ENCODE measurements at regions of chr1 and their contacts with region 1.

Region 1: DNA sequence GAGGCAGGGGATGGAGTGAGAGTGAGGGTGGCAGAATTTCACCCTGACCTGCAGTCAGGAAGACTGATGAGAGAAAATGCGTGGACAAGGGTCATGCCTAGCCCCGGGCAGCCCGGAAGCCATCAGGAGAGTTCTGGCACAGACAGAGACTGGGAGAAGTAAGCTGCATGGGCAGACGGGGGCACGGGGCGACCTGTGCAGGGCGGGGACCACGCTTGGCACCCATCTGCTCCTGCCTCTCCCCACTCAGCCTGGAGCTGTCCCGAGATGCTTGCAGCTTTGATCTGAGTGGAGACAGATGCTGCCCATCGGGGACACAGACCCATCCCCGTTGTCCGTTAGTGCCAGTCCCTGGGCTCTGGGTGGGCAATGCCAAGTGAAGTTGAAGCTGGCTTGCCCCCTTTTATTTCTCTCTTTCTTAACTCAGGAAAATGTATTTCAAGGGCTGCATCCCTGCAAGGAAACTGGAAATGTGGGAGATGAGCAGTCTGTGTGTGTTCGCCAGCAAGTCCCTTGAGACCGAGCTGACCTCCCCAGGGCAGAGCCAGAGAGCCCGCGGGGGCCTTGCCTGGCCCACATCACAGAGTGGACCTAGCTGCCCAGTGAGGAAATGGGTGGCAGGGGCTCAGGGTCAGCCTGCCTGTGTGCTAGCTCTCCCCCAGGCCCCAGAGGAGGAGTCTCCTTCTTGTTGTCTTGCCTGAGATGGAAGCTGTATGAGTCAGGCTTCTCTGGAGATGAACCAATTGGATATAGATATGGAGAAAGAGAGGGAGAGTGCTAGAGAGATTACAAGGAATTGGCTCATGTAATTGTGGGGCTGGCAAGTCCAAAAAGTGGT is 121.3 kb upstream of the C1orf174 start:
- DNase-seq: no peak
- H3K4me3 Mint-ChIP-seq: no peak overlapping the region
- H3K27ac Mint-ChIP-seq: no peak overlapping the region
- H3K4me1 Mint-ChIP-seq: no peaks in the 10 kb centered on the region
- H3K27me3 Mint-ChIP-seq: no peaks in the 10 kb centered on the region

Region 2: GRCh38 chr1:3586932-3587678 is 434.2 kb before region 1 on chr1:
- CTCF ChIA-PET with region 1: no interaction called
- intact Hi-C with region 1: loop called (anchors 5 kb)
- DNase-seq: no peak
- H3K4me3 Mint-ChIP-seq: no peak overlapping the region
- H3K27ac Mint-ChIP-seq: no peak overlapping the region
- H3K4me1 Mint-ChIP-seq: no peaks in the 10 kb centered on the region
- H3K27me3 Mint-ChIP-seq: no peaks in the 10 kb centered on the region

Region 3: GRCh38 chr1:3992103-3992556 is 29.2 kb before region 1 on chr1:
- CTCF ChIA-PET with region 1: no interaction called
- intact Hi-C with region 1: no loop called
- DNase-seq: peak; percentile 28
- H3K4me3 Mint-ChIP-seq: no peak overlapping the region
- H3K27ac Mint-ChIP-seq: no peak overlapping the region
- H3K4me1 Mint-ChIP-seq: no peaks in the 10 kb centered on the region
- H3K27me3 Mint-ChIP-seq: peaks cover 11% of the 10 kb centered on the region